Natural killer cell (primary cell): ENCODE measurements at regions of chr1 and their contacts with region 1.

Region 1: DNA sequence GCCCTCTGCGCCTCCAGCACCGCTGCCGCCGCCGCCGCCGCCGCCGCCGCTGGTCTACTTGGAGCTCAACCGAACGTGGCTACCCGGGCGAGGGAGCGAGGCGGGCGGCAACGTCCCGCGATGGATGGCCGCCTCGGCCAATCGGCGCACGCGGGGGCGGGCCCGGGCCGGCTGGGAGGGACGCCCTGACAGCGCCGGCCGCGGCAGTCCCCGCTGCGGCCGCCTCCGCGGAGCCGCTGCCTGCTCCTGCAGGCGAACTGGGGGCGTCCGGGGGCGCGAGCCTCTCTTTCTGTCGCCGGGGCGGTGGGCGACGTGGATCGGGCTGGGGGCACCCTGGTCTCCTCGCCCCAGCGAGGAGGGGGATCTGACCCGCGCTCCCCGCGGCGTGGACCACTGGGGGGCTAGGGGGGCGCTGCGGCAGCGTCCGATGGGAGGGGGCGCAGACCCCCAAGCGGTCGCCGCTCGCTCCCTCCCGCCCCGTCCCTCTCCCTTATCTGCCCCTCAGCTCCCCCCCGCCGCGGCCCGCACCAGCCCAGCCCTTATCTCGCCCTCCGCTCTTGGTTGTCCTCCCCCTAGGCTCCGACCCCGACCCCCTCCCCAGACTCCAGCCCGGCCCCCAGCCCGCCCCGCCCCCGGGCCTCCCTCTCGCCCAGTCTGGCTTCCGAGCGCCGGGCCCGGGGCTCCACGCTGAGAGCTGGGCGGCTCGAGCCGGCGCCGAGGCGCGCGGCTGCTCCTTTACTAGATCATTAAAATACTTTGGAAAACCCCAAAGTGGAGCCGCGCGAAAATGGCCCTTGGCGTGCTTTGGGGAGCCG is at the start of gene SSBP3:
- DNase-seq: peak; percentile 95
- ATAC-seq: peak; percentile 85 to 95 (median 91)
- H3K4me3 ChIP-seq: peak within 1 kb of the TSS; percentile 62
- H3K4me3 Mint-ChIP-seq: peak within 1 kb of the TSS; percentile 95
- H3K27ac ChIP-seq: peak within 1 kb of the TSS; percentile 71
- H3K27ac Mint-ChIP-seq: peak within 1 kb of the TSS; percentile 86 to 92
- H3K4me1 ChIP-seq: peaks cover 59% of the 10 kb centered on the region
- H3K4me1 Mint-ChIP-seq: peaks cover 65 to 67% of the 10 kb centered on the region in 2 donors
- H3K27me3 ChIP-seq: no peaks in the 10 kb centered on the region
- H3K27me3 Mint-ChIP-seq: no peaks in the 10 kb centered on the region
- CTCF ChIP-seq: no peak
- total RNA-seq, gene SSBP3: 162 to 224 (median 164) TPM

Region 2: GRCh38 chr1:54052934-54053744 is 353.4 kb before region 1 on chr1 and contains the starts of genes TCEANC2 and TMEM59:
- intact Hi-C with region 1: loop called (anchors 5 kb)
- DNase-seq: peak; percentile 93 to 99
- ATAC-seq: peak; percentile 88 to 96 (median 90)
- H3K4me3 ChIP-seq: peak within 1 kb of the TSS; percentile 88
- H3K4me3 Mint-ChIP-seq: no peak within 1 kb of the TSS
- H3K27ac ChIP-seq: peak within 1 kb of the TSS; percentile 84
- H3K27ac Mint-ChIP-seq: no peak within 1 kb of the TSS
- H3K4me1 ChIP-seq: peaks cover 33% of the 10 kb centered on the region
- H3K4me1 Mint-ChIP-seq: peaks cover 23 to 24% of the 10 kb centered on the region in 2 donors
- H3K27me3 ChIP-seq: no peaks in the 10 kb centered on the region
- H3K27me3 Mint-ChIP-seq: no peaks in the 10 kb centered on the region
- CTCF ChIP-seq: no peak
- total RNA-seq, gene TCEANC2: 5.1 to 9.5 (median 7.3) TPM
- total RNA-seq, gene TMEM59: 187 to 202 (median 199) TPM

Region 3: DNA sequence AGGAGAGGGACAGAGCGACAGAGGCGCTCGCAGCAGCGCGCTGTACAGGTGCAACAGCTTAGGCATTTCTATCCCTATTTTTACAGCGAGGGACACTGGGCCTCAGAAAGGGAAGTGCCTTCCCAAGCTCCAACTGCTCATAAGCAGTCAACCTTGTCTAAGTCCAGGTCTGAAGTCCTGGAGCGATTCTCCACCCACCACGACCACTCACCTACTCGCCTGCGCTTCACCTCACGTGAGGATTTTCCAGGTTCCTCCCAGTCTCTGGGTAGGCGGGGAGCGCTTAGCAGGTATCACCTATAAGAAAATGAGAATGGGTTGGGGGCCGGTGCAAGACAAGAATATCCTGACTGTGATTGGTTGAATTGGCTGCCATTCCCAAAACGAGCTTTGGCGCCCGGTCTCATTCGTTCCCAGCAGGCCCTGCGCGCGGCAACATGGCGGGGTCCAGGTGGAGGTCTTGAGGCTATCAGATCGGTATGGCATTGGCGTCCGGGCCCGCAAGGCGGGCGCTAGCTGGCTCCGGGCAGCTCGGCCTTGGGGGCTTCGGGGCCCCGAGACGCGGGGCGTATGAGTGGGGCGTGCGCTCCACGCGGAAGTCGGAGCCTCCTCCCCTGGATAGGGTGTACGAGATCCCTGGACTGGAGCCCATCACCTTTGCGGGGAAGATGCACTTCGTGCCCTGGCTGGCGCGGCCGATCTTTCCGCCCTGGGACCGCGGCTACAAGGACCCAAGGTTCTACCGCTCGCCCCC is 206.6 kb before region 1 on chr1 and contains the starts of genes CYB5RL and MRPL37:
- intact Hi-C with region 1: loop called (anchors 1 kb)
- DNase-seq: peak; percentile 78 to 95
- ATAC-seq: peak; percentile 96 to 97 (median 96)
- H3K4me3 ChIP-seq: peak within 1 kb of the TSS; percentile 83
- H3K4me3 Mint-ChIP-seq: peak within 1 kb of the TSS; percentile 92
- H3K27ac ChIP-seq: peak within 1 kb of the TSS; percentile 50
- H3K27ac Mint-ChIP-seq: peak within 1 kb of the TSS; percentile 84 to 90
- H3K4me1 ChIP-seq: peaks cover 13% of the 10 kb centered on the region
- H3K4me1 Mint-ChIP-seq: peaks cover 34 to 36% of the 10 kb centered on the region in 2 donors
- H3K27me3 ChIP-seq: no peaks in the 10 kb centered on the region
- H3K27me3 Mint-ChIP-seq: no peaks in the 10 kb centered on the region
- CTCF ChIP-seq: no peak
- total RNA-seq, gene CYB5RL: 5.6 to 6.7 (median 6.2) TPM
- total RNA-seq, gene MRPL37: 23.0 to 31.9 (median 28.8) TPM

Region 4: GRCh38 chr1:54310439-54311328 is 95.9 kb before region 1 on chr1:
- intact Hi-C with region 1: loop called (anchors 10 kb)
- DNase-seq: peak; percentile 24 to 40
- ATAC-seq: peak; percentile 40 to 69 (median 40)
- H3K4me3 ChIP-seq: no peak overlapping the region
- H3K4me3 Mint-ChIP-seq: no peak overlapping the region
- H3K27ac ChIP-seq: no peak overlapping the region
- H3K27ac Mint-ChIP-seq: peak overlapping the region; percentile 70 to 83
- H3K4me1 ChIP-seq: peaks cover 51% of the 10 kb centered on the region
- H3K4me1 Mint-ChIP-seq: peaks cover 70 to 91% of the 10 kb centered on the region in 2 donors
- H3K27me3 ChIP-seq: no peaks in the 10 kb centered on the region
- H3K27me3 Mint-ChIP-seq: no peaks in the 10 kb centered on the region
- CTCF ChIP-seq: no peak

Region 5: GRCh38 chr1:54488779-54489626 is 82.5 kb after region 1 on chr1:
- intact Hi-C with region 1: loop called (anchors 1 kb)
- DNase-seq: peak; percentile 81 to 82
- ATAC-seq: peak; percentile 58 to 84 (median 70)
- H3K4me3 ChIP-seq: peak overlapping the region; percentile 58
- H3K4me3 Mint-ChIP-seq: peak overlapping the region; percentile 89
- H3K27ac ChIP-seq: peak overlapping the region; percentile 70
- H3K27ac Mint-ChIP-seq: peak overlapping the region; percentile 81 to 92
- H3K4me1 ChIP-seq: peaks cover 49% of the 10 kb centered on the region
- H3K4me1 Mint-ChIP-seq: peaks cover 42 to 49% of the 10 kb centered on the region in 2 donors
- H3K27me3 ChIP-seq: peaks cover 7% of the 10 kb centered on the region
- H3K27me3 Mint-ChIP-seq: peaks cover 6 to 17% of the 10 kb centered on the region in 2 donors
- CTCF ChIP-seq: peak; percentile 98

Region 6: GRCh38 chr1:54810100-54810942 is 403.8 kb after region 1 on chr1:
- intact Hi-C with region 1: loop called (anchors 5 kb)
- DNase-seq: peak; percentile 68 to 79
- ATAC-seq: peak; percentile 37 to 46 (median 46)
- H3K4me3 ChIP-seq: no peak overlapping the region
- H3K4me3 Mint-ChIP-seq: peak overlapping the region; percentile 40
- H3K27ac ChIP-seq: no peak overlapping the region
- H3K27ac Mint-ChIP-seq: peak overlapping the region; percentile 94 to 95
- H3K4me1 ChIP-seq: peaks cover 76% of the 10 kb centered on the region
- H3K4me1 Mint-ChIP-seq: peaks cover 55 to 64% of the 10 kb centered on the region in 2 donors
- H3K27me3 ChIP-seq: no peaks in the 10 kb centered on the region
- H3K27me3 Mint-ChIP-seq: no peaks in the 10 kb centered on the region
- CTCF ChIP-seq: peak; percentile 87